Posterior vena cava (tissue), 2 donors: ENCODE measurements at regions of chr4 and their contacts with region 1.

Region 1: DNA sequence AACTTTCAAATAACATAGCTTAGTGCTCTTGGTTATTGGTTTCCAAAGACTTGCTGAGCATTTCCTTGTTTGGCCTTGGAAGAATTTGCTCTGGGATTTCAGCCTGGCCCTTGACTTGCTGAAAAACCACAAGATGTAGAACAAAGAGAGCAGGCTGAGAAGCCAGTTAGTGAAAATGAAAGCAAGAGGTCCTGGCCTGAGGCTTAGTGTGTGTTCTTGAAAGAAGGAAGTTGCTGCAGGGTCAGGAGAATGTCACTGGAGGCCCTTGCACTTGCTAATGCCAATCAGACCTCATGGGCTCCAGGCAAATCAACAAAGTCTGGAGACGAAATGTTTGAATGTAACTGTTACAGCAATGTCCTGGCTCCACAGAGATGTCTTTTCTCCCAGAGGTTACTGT is 79.4 kb downstream of the SYNPO2 start:
- DNase-seq: no peak

Region 2: GRCh38 chr4:118740869-118741268 is 227.1 kb before region 1 on chr4:
- intact Hi-C with region 1: loop called in 1 of 2 experiments (anchors 10 kb)
- DNase-seq: no peak

Region 3: DNA sequence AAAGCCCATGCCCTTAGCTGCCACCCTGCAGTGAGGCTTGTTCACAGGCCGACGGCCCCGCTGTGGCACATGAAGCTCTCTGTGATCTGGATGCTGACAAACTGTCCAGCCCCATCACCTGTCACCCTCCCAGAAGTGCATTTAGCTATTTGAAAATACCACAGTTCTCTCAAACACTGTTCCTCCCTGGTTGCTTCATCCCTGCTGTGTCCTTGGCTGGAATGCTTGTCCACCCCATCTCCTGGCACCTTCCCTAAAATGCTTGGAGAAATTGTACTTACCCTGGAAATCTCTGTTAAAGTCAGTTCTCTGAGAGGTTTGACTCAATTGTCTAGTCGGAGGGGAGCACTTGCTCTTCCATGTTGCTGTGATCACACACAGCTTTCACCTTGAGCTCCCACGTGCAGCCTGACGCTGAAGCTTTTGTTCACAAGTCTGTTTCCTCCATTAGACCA is 69.3 kb before region 1 on chr4:
- intact Hi-C with region 1: loop called in 1 of 2 experiments (anchors 5 kb)
- DNase-seq: peak; percentile 79